ENCODE measurements at regions of chr9 and their contacts with region 1.

Region 1: GRCh38 chr9:73116031-73116430 is 35.6 kb upstream of the ANXA1 start:
- DNase-seq: no peak
- H3K4me3 Mint-ChIP-seq: no peak overlapping the region
- H3K27ac Mint-ChIP-seq: no peak overlapping the region
- H3K4me1 Mint-ChIP-seq: peaks cover 18% of the 10 kb centered on the region
- H3K27me3 Mint-ChIP-seq: no peaks in the 10 kb centered on the region
- CTCF ChIP-seq: no peak

Region 2: GRCh38 chr9:73104342-73104741 is 11.7 kb before region 1 on chr9:
- CTCF ChIA-PET with region 1: interaction called, 18 read pairs
- POLR2A ChIA-PET with region 1: interaction called, 6 read pairs
- intact Hi-C with region 1: no loop called
- DNase-seq: no peak
- H3K4me3 Mint-ChIP-seq: no peak overlapping the region
- H3K27ac Mint-ChIP-seq: no peak overlapping the region
- H3K4me1 Mint-ChIP-seq: peaks cover 7% of the 10 kb centered on the region
- H3K27me3 Mint-ChIP-seq: no peaks in the 10 kb centered on the region
- CTCF ChIP-seq: no peak

Region 3: DNA sequence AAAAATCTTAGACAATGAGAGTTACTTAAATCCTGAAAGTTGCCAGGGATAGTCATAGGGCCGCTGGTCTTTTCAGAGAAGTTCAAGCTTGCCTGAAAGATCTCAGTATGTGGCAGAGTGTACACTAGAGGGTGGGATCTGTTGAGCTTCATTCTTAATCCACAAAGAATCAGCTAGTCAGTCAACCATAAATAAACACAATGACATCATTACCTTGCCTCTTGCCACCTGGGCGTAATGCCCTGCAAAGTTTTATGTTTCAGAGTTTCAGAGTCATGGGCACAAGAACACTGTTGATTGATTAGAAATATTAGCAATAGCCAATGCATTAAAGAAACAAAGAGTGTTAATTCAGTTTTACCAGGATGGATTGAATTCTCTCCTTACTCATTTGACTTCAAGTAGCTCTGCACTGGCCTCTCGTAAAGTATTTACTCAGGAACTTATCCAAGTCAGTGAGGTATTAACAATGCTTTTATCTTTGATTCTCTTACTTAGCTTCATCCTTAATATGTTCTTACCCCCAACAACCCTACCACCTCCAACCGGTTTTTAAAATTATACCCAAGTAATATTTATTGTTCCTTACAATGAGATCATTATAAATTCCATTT is 21.4 kb after region 1 on chr9:
- CTCF ChIA-PET with region 1: no interaction called
- POLR2A ChIA-PET with region 1: interaction called, 129 read pairs
- intact Hi-C with region 1: loop called (anchors 2 kb)
- DNase-seq: peak; percentile 67
- H3K4me3 Mint-ChIP-seq: peak overlapping the region; percentile 56
- H3K27ac Mint-ChIP-seq: peak overlapping the region; percentile 7
- H3K4me1 Mint-ChIP-seq: peaks cover 28% of the 10 kb centered on the region
- H3K27me3 Mint-ChIP-seq: no peaks in the 10 kb centered on the region
- CTCF ChIP-seq: no peak

Region 4: GRCh38 chr9:73149371-73150067 is 33.5 kb after region 1 on chr9:
- CTCF ChIA-PET with region 1: interaction called, 6 read pairs
- POLR2A ChIA-PET with region 1: interaction called, 73 read pairs
- intact Hi-C with region 1: loop called (anchors 1 kb)
- DNase-seq: peak; percentile 83
- H3K4me3 Mint-ChIP-seq: peak overlapping the region; percentile 56
- H3K27ac Mint-ChIP-seq: peak overlapping the region; percentile 86
- H3K4me1 Mint-ChIP-seq: peaks cover 40% of the 10 kb centered on the region
- H3K27me3 Mint-ChIP-seq: no peaks in the 10 kb centered on the region
- CTCF ChIP-seq: no peak

Region 5: DNA sequence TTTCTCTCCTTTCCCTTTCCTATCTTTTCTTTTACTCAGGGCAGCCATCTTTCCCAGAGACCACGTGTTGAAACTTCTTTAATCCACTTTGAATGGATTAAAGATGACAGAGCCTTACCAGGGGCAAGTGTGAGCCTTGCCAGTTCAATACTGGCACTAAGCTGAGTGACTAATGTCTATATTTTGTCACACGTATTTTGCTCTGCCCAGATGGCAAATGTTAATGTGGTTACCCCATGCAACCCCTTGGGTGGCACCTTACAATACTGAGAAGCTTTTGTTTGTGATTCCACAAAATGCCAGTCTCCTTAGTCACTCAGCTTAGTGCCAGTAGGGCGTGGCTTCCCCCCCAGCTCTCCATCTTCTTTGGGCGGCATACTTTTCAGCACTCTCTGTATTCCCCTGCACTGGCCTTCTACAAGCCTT is 60.4 kb after region 1 on chr9:
- CTCF ChIA-PET with region 1: interaction called, 78 read pairs
- POLR2A ChIA-PET with region 1: interaction called, 12 read pairs
- intact Hi-C with region 1: no loop called
- DNase-seq: peak; percentile 80
- H3K4me3 Mint-ChIP-seq: no peak overlapping the region
- H3K27ac Mint-ChIP-seq: peak overlapping the region; percentile 83
- H3K4me1 Mint-ChIP-seq: peaks cover 15% of the 10 kb centered on the region
- H3K27me3 Mint-ChIP-seq: no peaks in the 10 kb centered on the region
- CTCF ChIP-seq: no peak

Region 6: DNA sequence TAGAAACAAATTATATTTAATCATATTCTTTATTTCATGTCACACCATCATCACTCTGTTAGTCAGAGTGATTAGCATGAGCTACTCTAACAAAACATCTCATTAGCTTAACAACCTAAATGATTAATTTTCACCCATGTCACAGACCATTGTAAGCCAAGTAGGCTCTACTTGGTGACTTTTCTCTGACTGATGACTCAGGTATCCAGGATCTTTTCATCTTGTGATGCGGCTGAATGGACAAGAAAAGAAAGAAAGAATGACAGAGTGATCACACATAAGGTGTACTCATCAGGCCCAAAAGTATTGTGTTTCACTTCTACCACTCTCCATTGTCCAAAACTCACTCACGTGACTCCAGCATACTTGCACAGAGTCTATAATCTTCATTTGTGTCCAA is 335.0 kb after region 1 on chr9:
- CTCF ChIA-PET with region 1: no interaction called
- POLR2A ChIA-PET with region 1: no interaction called
- intact Hi-C with region 1: no loop called
- DNase-seq: no peak
- H3K4me3 Mint-ChIP-seq: no peak overlapping the region
- H3K27ac Mint-ChIP-seq: no peak overlapping the region
- H3K4me1 Mint-ChIP-seq: no peaks in the 10 kb centered on the region
- H3K27me3 Mint-ChIP-seq: peaks cover 44% of the 10 kb centered on the region
- CTCF ChIP-seq: no peak

Measured in MCF 10A (cell line).